ENCODE measurements at regions of chr9 and their contacts with region 1.

Region 1: DNA sequence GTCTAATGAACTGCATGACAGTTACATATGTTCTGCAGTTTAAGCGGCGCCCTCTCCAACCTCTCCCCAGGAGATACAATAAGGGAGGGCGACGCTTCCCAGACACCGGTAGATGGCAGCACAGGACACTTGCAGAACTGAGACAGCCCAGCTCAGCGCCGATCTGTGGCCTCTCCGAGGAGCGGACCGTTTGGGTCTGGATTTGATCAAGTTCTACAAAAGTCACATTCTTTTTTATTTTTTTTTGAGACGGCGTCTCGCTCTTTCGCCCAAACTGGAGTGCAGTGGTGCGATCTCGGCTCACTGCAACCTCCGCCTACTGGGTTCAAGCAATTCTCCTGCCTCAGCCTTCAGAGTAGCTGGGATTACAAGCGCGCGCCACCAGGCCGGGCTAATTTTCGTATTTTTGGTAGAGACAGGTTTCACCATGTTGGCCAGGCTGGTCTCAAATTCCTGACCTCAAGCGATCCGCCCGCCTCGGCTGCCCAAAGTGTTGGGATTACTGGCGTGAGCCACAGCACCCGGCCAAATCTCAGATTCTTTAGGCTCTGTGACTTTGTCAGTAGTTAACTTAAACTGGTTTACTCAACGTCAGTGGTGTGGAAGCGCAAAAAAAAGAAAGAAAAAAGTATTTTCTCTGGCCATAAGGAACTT is 1.4 kb upstream of the ATOSB start:
- DNase-seq: peak; percentile 73 to 94 (median 91)
- H3K4me3 ChIP-seq: peak overlapping the region; percentile 51 to 97 (median 72)
- H3K27ac ChIP-seq: peak overlapping the region in 43 of 59 donors; percentile 9 to 97 (median 80)
- H3K27me3 ChIP-seq: no peaks in the 10 kb centered on the region
- CTCF ChIP-seq: peak; percentile 89 to 98 (median 95)

Region 2: GRCh38 chr9:34929506-34930102 is 187.4 kb before region 1 on chr9:
- intact Hi-C with region 1: no loop called
- DNase-seq: peak; percentile 9 to 66 (median 50)
- H3K4me3 ChIP-seq: no peak overlapping the region
- H3K27ac ChIP-seq: no peak overlapping the region
- H3K27me3 ChIP-seq: peaks cover 0 to 4% (median 0%) of the 10 kb centered on the region in 45 donors
- CTCF ChIP-seq: peak in 54 of 56 donors; percentile 27 to 72 (median 59)

Region 3: GRCh38 chr9:35161713-35162604 is 44.9 kb after region 1 on chr9 and contains the start of gene UNC13B:
- intact Hi-C with region 1: loop called in 1 of 2 experiments (anchors 2 kb)
- DNase-seq: peak; percentile 91 to 96 (median 93)
- H3K4me3 ChIP-seq: peak within 1 kb of the TSS; percentile 53 to 99 (median 90)
- H3K27ac ChIP-seq: peak within 1 kb of the TSS; percentile 41 to 94 (median 82)
- H3K27me3 ChIP-seq: no peaks in the 10 kb centered on the region
- CTCF ChIP-seq: peak in 47 of 56 donors; percentile 10 to 67 (median 42)
- total RNA-seq, gene UNC13B: 28.7 to 55.9 (median 42.0) TPM

Region 4: DNA sequence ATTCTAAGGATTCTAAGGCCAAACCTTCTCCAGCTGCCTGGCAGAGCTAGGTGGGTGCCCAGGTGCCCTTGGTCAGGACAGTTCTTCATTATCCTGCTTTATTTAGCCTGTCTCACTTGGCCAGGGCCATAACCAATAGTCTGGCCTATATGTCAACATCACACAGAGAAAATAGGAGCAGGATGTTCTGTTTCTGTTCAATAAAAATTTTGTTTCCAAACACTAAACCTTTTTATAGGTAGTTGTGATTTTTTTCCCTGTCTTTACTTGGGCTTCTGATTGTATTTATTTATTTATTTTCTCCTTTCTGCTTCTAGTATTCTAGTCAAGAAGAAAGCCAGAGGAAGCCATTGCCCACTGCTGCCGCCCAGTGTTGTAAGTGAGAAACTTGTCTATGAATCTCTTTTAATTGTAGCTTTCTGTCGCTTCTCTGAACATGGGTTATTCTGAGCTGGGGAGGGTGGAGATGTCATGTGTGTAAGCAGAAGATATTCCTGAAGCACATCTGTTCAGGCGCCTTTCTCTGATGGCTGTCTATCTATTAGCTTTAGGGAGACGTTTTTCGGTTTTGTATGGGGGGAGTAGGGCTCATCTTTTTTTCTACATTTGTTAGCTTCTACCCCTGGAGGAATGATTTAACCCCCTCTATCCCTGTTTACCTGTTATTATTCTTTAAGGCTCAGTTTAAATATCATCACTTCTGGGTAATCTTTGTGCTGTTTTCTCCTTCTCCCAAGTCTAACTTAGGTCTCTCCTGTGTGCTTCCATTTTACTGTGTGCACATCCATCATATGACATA is 141.8 kb after region 1 on chr9:
- intact Hi-C with region 1: loop called (anchors 2 kb)
- DNase-seq: peak; percentile 42 to 90 (median 76)
- H3K4me3 ChIP-seq: peak overlapping the region in 2 of 59 donors; percentile 2 to 4
- H3K27ac ChIP-seq: no peak overlapping the region
- H3K27me3 ChIP-seq: no peaks in the 10 kb centered on the region
- CTCF ChIP-seq: peak; percentile 53 to 88 (median 72)

Region 5: GRCh38 chr9:35385042-35385441 is 268.0 kb after region 1 on chr9:
- intact Hi-C with region 1: loop called (anchors 10 kb)
- DNase-seq: peak in 1 of 10 donors; percentile 55
- H3K4me3 ChIP-seq: no peak overlapping the region
- H3K27ac ChIP-seq: no peak overlapping the region
- H3K27me3 ChIP-seq: no peaks in the 10 kb centered on the region
- CTCF ChIP-seq: peak in 51 of 56 donors; percentile 12 to 66 (median 47)

Region 6: DNA sequence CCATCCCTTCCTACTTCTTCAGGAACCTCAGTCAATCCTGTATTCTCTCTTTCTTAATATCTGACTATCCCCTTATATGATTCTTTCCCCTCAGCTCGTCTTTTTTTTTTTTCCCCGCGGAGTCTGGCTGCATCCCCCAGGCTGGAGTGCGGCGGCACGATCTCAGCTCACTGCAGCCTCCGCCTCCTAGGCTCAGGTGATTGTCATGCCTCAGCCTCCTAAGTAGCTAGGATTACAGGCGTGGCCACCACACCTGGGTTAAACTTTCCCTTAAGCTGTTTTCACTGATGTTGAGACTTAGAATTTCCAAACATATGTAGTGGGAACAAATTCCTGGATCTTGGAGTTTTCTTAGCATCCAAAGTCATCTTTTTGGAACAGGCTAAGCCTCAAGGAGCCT is 359.6 kb after region 1 on chr9:
- intact Hi-C with region 1: loop called (anchors 2 kb)
- DNase-seq: no peak
- H3K4me3 ChIP-seq: no peak overlapping the region
- H3K27ac ChIP-seq: no peak overlapping the region
- H3K27me3 ChIP-seq: no peaks in the 10 kb centered on the region
- CTCF ChIP-seq: no peak

Region 7: GRCh38 chr9:35553670-35554543 is 436.9 kb after region 1 on chr9:
- intact Hi-C with region 1: loop called (anchors 2 to 5 kb)
- DNase-seq: peak in 8 of 10 donors; percentile 54 to 78 (median 67)
- H3K4me3 ChIP-seq: peak overlapping the region in 13 of 59 donors; percentile 1 to 38 (median 19)
- H3K27ac ChIP-seq: peak overlapping the region in 53 of 59 donors; percentile 7 to 86 (median 68)
- H3K27me3 ChIP-seq: no peaks in the 10 kb centered on the region
- CTCF ChIP-seq: peak; percentile 75 to 97 (median 92)

Region 8: DNA sequence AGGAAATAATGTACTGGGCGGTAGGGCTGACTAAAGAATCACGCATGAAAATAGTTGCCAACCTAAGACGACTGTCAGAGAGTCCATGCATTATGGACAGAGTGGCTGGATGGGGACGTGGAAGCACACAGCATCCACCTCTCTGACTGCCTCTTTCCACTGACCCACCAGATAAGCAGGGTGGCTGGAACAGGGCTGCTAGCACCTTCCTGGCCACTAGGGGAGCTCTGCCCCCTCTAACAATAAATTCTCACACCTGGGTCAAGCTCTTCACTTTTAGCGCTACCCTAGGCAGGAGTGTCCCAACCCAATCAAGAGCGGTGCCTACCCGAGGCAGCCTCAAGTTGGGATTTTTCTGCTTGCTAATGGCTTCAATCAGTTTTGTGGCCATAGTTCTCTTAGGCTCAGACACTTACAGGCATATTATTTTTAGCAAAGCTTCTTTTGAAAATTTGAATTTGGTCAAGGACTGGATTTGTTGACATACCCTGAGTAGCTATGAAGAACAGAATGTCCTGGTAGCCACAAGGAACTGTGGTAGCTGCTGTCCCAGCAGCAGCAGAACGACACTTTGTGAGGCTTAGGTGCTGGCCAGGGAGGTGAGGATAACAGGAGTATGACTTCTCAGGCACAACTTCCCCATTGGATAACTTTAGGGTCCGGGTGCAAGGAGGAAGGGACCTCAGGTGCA is 579.6 kb after region 1 on chr9:
- intact Hi-C with region 1: no loop called
- DNase-seq: peak in 7 of 10 donors; percentile 35 to 69 (median 53)
- H3K4me3 ChIP-seq: no peak overlapping the region
- H3K27ac ChIP-seq: peak overlapping the region in 28 of 59 donors; percentile 0 to 70 (median 30)
- H3K27me3 ChIP-seq: no peaks in the 10 kb centered on the region
- CTCF ChIP-seq: peak; percentile 56 to 84 (median 72)

Measured in dorsolateral prefrontal cortex (tissue), 120 donors.